SK-N-SH (cell line): ENCODE measurements at regions of chr17 and their contacts with region 1.

Region 1: GRCh38 chr17:74566132-74566753 is 1.1 kb downstream of the CD300H start:
- DNase-seq: peak; percentile 82
- H3K4me3 ChIP-seq: no peak overlapping the region; a peak in 1 of 4 replicates
- H3K27ac ChIP-seq: no peak overlapping the region
- H3K4me1 ChIP-seq: no peaks in the 10 kb centered on the region
- H3K27me3 ChIP-seq: no peaks in the 10 kb centered on the region
- CTCF ChIP-seq: peak; percentile 22
- EP300 ChIP-seq: no peak
- RAD21 ChIP-seq: peak; percentile 74

Region 2: GRCh38 chr17:74259667-74260524 is 306.3 kb before region 1 on chr17:
- CTCF ChIA-PET with region 1: no interaction called
- POLR2A ChIA-PET with region 1: no interaction called
- DNase-seq: peak; percentile 56
- H3K4me3 ChIP-seq: no peak overlapping the region
- H3K27ac ChIP-seq: no peak overlapping the region
- H3K4me1 ChIP-seq: peaks cover 0 to 5% of the 10 kb centered on the region in 2 experiments; a peak in 1 of 4 replicates
- H3K27me3 ChIP-seq: no peaks in the 10 kb centered on the region
- CTCF ChIP-seq: no peak
- EP300 ChIP-seq: no peak
- RAD21 ChIP-seq: no peak

Region 3: GRCh38 chr17:74545843-74546230 is 20.4 kb before region 1 on chr17 and contains the start of gene CD300C:
- CTCF ChIA-PET with region 1: interaction called, 10 read pairs
- POLR2A ChIA-PET with region 1: no interaction called
- DNase-seq: no peak
- H3K4me3 ChIP-seq: no peak within 1 kb of the TSS
- H3K27ac ChIP-seq: no peak within 1 kb of the TSS
- H3K4me1 ChIP-seq: no peaks in the 10 kb centered on the region
- H3K27me3 ChIP-seq: no peaks in the 10 kb centered on the region
- CTCF ChIP-seq: no peak
- EP300 ChIP-seq: no peak
- RAD21 ChIP-seq: no peak
- polyA plus RNA-seq, gene CD300C: not detected in 2 replicates

Region 4: GRCh38 chr17:74592087-74592990 is 26.1 kb after region 1 on chr17 and contains the start of gene CD300LD:
- CTCF ChIA-PET with region 1: interaction called, 21 read pairs
- POLR2A ChIA-PET with region 1: no interaction called
- DNase-seq: no peak
- H3K4me3 ChIP-seq: no peak within 1 kb of the TSS
- H3K27ac ChIP-seq: no peak within 1 kb of the TSS
- H3K4me1 ChIP-seq: no peaks in the 10 kb centered on the region
- H3K27me3 ChIP-seq: no peaks in the 10 kb centered on the region
- CTCF ChIP-seq: no peak
- EP300 ChIP-seq: no peak
- RAD21 ChIP-seq: no peak
- polyA plus RNA-seq, gene CD300LD: not detected in 2 replicates

Region 5: DNA sequence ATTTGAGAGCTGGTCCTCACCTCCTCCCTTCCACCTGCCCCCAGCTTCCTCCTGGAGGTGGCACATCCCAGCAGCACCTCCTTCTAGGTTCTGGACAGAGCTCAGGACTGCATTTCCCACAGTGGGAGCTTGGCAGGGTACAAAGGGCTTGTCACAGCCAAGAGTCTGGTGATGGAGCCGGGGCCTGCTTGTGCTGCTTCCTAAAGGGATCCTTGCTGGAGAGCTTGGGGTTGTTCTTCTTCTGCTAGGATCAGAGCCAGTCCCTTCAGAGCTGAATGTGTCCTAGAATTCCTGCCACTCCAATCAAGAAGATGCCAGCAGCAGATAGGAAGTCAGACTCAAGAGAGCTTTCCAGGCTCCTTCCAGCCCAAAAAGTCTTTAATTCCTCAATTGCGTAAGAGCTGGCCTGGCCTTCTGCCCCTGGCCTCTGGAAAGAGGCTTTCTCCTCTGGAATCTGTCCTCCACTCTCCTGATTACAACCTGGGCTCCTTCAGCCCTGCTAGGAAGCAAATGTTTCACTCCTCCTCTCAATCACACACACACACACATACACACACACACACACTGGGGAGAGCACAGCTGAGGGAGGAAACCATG is 52.9 kb after region 1 on chr17:
- CTCF ChIA-PET with region 1: interaction called, 11 read pairs
- POLR2A ChIA-PET with region 1: no interaction called
- DNase-seq: no peak
- H3K4me3 ChIP-seq: no peak overlapping the region
- H3K27ac ChIP-seq: no peak overlapping the region
- H3K4me1 ChIP-seq: no peaks in the 10 kb centered on the region
- H3K27me3 ChIP-seq: no peaks in the 10 kb centered on the region
- CTCF ChIP-seq: no peak
- EP300 ChIP-seq: no peak
- RAD21 ChIP-seq: no peak

Region 6: GRCh38 chr17:74654742-74655141 is 88.5 kb after region 1 on chr17:
- CTCF ChIA-PET with region 1: interaction called, 30 read pairs
- POLR2A ChIA-PET with region 1: no interaction called
- DNase-seq: peak; percentile 47
- H3K4me3 ChIP-seq: no peak overlapping the region
- H3K27ac ChIP-seq: no peak overlapping the region
- H3K4me1 ChIP-seq: peaks cover 0 to 13% of the 10 kb centered on the region in 2 experiments; a peak in 1 of 4 replicates
- H3K27me3 ChIP-seq: no peaks in the 10 kb centered on the region
- CTCF ChIP-seq: no peak
- EP300 ChIP-seq: no peak
- RAD21 ChIP-seq: no peak